Activated CD4-positive, alpha-beta T cell treated with anti-CD3 and anti-CD28 coated beads, Interleukin-2, amount 10 ng/mL, durations not matched to agents 24 days and 14 days (primary cell): ENCODE measurements at regions of chr19 and their contacts with region 1.

Region 1: GRCh38 chr19:6362027-6362350 is 658 bp downstream of the CLPP start:
- DNase-seq: no peak
- H3K4me3 Mint-ChIP-seq: peak overlapping the region; percentile 100
- H3K27ac Mint-ChIP-seq: peak overlapping the region; percentile 98
- H3K4me1 Mint-ChIP-seq: peaks cover 17% of the 10 kb centered on the region
- H3K27me3 Mint-ChIP-seq: no peaks in the 10 kb centered on the region

Region 2: GRCh38 chr19:6279931-6280591 is 81.9 kb before region 1 on chr19 and contains the start of gene MLLT1:
- intact Hi-C with region 1: loop called (anchors 1 kb)
- DNase-seq: peak; percentile 99
- H3K4me3 Mint-ChIP-seq: peak within 1 kb of the TSS; percentile 95
- H3K27ac Mint-ChIP-seq: peak within 1 kb of the TSS; percentile 92
- H3K4me1 Mint-ChIP-seq: peaks cover 23% of the 10 kb centered on the region
- H3K27me3 Mint-ChIP-seq: peaks cover 2% of the 10 kb centered on the region
- total RNA-seq, gene MLLT1: 67.5 and 74.3 TPM in 2 replicates

Region 3: GRCh38 chr19:6372594-6373095 is 10.7 kb after region 1 on chr19 and contains the start of gene ALKBH7:
- intact Hi-C with region 1: loop called (anchors 1 kb)
- DNase-seq: peak; percentile 99
- H3K4me3 Mint-ChIP-seq: peak within 1 kb of the TSS; percentile 92
- H3K27ac Mint-ChIP-seq: peak within 1 kb of the TSS; percentile 94
- H3K4me1 Mint-ChIP-seq: peaks cover 11% of the 10 kb centered on the region
- H3K27me3 Mint-ChIP-seq: no peaks in the 10 kb centered on the region
- total RNA-seq, gene ALKBH7: 23.9 and 25.0 TPM in 2 replicates

Region 4: GRCh38 chr19:6393074-6393983 is 31.3 kb after region 1 on chr19 and contains the start of gene GTF2F1:
- intact Hi-C with region 1: loop called (anchors 1 kb)
- DNase-seq: peak; percentile 97
- H3K4me3 Mint-ChIP-seq: peak within 1 kb of the TSS; percentile 90
- H3K27ac Mint-ChIP-seq: peak within 1 kb of the TSS; percentile 95
- H3K4me1 Mint-ChIP-seq: peaks cover 18% of the 10 kb centered on the region
- H3K27me3 Mint-ChIP-seq: no peaks in the 10 kb centered on the region
- total RNA-seq, gene GTF2F1: 60.7 and 63.5 TPM in 2 replicates

Region 5: DNA sequence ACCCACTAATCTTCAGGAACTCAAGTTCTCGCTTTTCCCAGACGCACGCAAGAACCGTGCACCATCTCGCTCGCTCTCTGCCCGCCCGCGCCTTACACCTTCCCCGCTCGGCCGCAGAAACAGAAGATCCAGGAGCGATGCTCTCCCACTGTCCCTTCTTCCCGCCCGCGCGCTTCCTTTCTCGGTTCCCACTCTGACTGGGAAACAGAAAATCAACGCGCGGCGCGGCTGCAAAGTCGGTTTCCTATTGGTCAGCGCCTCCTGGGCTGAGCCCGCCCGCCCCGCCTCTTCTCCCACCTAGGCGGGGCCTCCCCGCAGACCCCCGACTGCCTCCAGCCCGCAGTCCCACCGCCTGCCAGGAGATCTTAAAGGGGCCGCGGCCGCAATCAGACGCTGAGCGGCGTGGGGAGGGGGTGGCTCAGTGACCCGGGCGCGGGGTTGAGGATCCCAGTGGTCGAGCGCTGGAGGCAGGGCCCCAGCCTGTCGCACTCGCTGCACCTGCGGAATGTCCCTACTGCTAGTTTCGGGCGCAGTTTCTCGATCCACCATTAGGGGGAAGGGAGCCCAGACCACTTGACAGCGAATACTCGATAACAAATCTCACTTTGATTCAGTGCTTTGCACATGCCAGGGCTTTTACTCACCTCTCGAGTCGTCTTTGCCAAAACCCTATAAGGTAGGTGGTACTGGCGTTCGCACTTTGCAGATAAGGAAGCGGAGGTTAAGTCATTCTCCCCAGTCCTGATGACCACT is 98.3 kb after region 1 on chr19:
- intact Hi-C with region 1: loop called (anchors 2 kb)
- DNase-seq: peak; percentile 99
- H3K4me3 Mint-ChIP-seq: peak overlapping the region; percentile 93
- H3K27ac Mint-ChIP-seq: peak overlapping the region; percentile 84
- H3K4me1 Mint-ChIP-seq: peaks cover 17% of the 10 kb centered on the region
- H3K27me3 Mint-ChIP-seq: no peaks in the 10 kb centered on the region